Naive thymus-derived CD4-positive, alpha-beta T cell (primary cell): ENCODE measurements at regions of chr14 and their contacts with region 1.

Region 1: GRCh38 chr14:104677512-104678332 is 11.7 kb upstream of the INF2 start:
- DNase-seq: peak; percentile 38 to 86 (median 51)
- ATAC-seq: peak; percentile 78
- H3K4me3 ChIP-seq: peak overlapping the region; percentile 72
- H3K4me3 Mint-ChIP-seq: peak overlapping the region; percentile 68 to 86 (median 82)
- H3K27ac ChIP-seq: peak overlapping the region; percentile 40
- H3K27ac Mint-ChIP-seq: peak overlapping the region in 6 of 9 donors; percentile 21 to 87 (median 54)
- H3K4me1 ChIP-seq: peaks cover 6 to 7% of the 10 kb centered on the region in 2 donors
- H3K4me1 Mint-ChIP-seq: peaks cover 0 to 40% (median 5%) of the 10 kb centered on the region in 7 donors
- H3K27me3 ChIP-seq: no peaks in the 10 kb centered on the region
- H3K27me3 Mint-ChIP-seq: peaks cover 0 to 10% (median 0%) of the 10 kb centered on the region in 5 donors

Region 2: DNA sequence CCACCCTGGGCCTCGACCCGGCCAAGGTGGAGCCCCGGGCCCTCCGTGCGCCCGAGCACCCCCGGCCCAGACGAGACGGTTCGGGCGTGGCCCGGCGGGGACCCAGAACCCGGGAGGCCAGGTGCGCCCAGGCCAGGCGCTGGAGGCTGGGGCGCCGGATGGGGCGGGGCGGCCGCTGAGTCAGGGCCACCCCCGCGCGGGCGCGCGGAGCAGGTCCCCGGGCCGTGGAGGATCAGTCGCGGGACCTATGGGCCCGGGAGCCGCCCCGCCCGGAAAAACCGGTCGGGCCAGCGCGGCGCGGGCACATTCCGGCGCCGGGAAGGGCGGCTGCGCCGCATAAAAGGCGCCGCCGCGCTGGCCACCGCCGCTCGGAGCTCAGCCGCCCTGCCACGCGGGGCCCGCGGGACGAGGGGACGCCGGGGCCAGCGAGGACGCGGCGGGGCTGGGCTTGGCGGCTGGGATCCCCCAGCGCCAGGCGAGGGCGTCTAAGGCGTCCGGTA is 560.9 kb before region 1 on chr14:
- CTCF ChIA-PET with region 1: no interaction called
- POLR2A ChIA-PET with region 1: no interaction called
- intact Hi-C with region 1: no loop called
- DNase-seq: peak in 1 of 9 donors; percentile 47
- ATAC-seq: no peak
- H3K4me3 ChIP-seq: peak overlapping the region; percentile 27
- H3K4me3 Mint-ChIP-seq: peak overlapping the region in 4 of 10 donors; percentile 32 to 72 (median 61)
- H3K27ac ChIP-seq: no peak overlapping the region
- H3K27ac Mint-ChIP-seq: no peak overlapping the region
- H3K4me1 ChIP-seq: no peaks in the 10 kb centered on the region
- H3K4me1 Mint-ChIP-seq: peaks cover 0 to 3% (median 0%) of the 10 kb centered on the region in 7 donors
- H3K27me3 ChIP-seq: no peaks in the 10 kb centered on the region
- H3K27me3 Mint-ChIP-seq: peaks cover 4 to 45% (median 40%) of the 10 kb centered on the region in 5 donors

Region 3: GRCh38 chr14:104614134-104614812 is 63.4 kb before region 1 on chr14:
- CTCF ChIA-PET with region 1: no interaction called
- POLR2A ChIA-PET with region 1: no interaction called
- intact Hi-C with region 1: no loop called
- DNase-seq: no peak
- ATAC-seq: no peak
- H3K4me3 ChIP-seq: no peak overlapping the region
- H3K4me3 Mint-ChIP-seq: no peak overlapping the region
- H3K27ac ChIP-seq: no peak overlapping the region
- H3K27ac Mint-ChIP-seq: no peak overlapping the region
- H3K4me1 ChIP-seq: no peaks in the 10 kb centered on the region
- H3K4me1 Mint-ChIP-seq: peaks cover 0 to 4% (median 0%) of the 10 kb centered on the region in 7 donors
- H3K27me3 ChIP-seq: no peaks in the 10 kb centered on the region
- H3K27me3 Mint-ChIP-seq: peaks cover 18 to 45% (median 36%) of the 10 kb centered on the region in 5 donors

Region 4: GRCh38 chr14:104650057-104650981 is 27.4 kb before region 1 on chr14:
- CTCF ChIA-PET with region 1: no interaction called
- POLR2A ChIA-PET with region 1: no interaction called
- intact Hi-C with region 1: loop called in 1 of 2 experiments (anchors 1 kb)
- DNase-seq: peak; percentile 35 to 74 (median 53)
- ATAC-seq: peak; percentile 82
- H3K4me3 ChIP-seq: peak overlapping the region; percentile 51
- H3K4me3 Mint-ChIP-seq: peak overlapping the region in 8 of 10 donors; percentile 36 to 64 (median 55)
- H3K27ac ChIP-seq: no peak overlapping the region
- H3K27ac Mint-ChIP-seq: no peak overlapping the region
- H3K4me1 ChIP-seq: peaks cover 3 to 9% of the 10 kb centered on the region in 2 donors
- H3K4me1 Mint-ChIP-seq: peaks cover 0 to 3% (median 0%) of the 10 kb centered on the region in 7 donors
- H3K27me3 ChIP-seq: no peaks in the 10 kb centered on the region
- H3K27me3 Mint-ChIP-seq: peaks cover 0 to 18% (median 0%) of the 10 kb centered on the region in 5 donors

Region 5: GRCh38 chr14:104665657-104666522 is 11.8 kb before region 1 on chr14:
- CTCF ChIA-PET with region 1: interaction called, 7 read pairs
- POLR2A ChIA-PET with region 1: interaction called, 12 read pairs
- intact Hi-C with region 1: loop called in 1 of 2 experiments (anchors 1 kb)
- DNase-seq: peak in 7 of 9 donors; percentile 33 to 65 (median 55)
- ATAC-seq: peak; percentile 90
- H3K4me3 ChIP-seq: no peak overlapping the region
- H3K4me3 Mint-ChIP-seq: peak overlapping the region in 9 of 10 donors; percentile 7 to 80 (median 39)
- H3K27ac ChIP-seq: peak overlapping the region; percentile 17
- H3K27ac Mint-ChIP-seq: peak overlapping the region in 8 of 9 donors; percentile 60 to 90 (median 78)
- H3K4me1 ChIP-seq: peaks cover 12 to 14% of the 10 kb centered on the region in 2 donors
- H3K4me1 Mint-ChIP-seq: peaks cover 13 to 32% (median 24%) of the 10 kb centered on the region in 7 donors
- H3K27me3 ChIP-seq: peaks cover 0 to 5% of the 10 kb centered on the region in 2 donors
- H3K27me3 Mint-ChIP-seq: peaks cover 0 to 25% (median 8%) of the 10 kb centered on the region in 5 donors

Region 6: GRCh38 chr14:104689109-104689880 is 11.6 kb after region 1 on chr14 and contains the start of gene INF2:
- CTCF ChIA-PET with region 1: interaction called, 4 read pairs
- POLR2A ChIA-PET with region 1: interaction called, 21 read pairs
- intact Hi-C with region 1: loop called in 1 of 2 experiments (anchors 1 kb)
- DNase-seq: peak in 6 of 9 donors; percentile 36 to 64 (median 40)
- ATAC-seq: peak; percentile 79
- H3K4me3 ChIP-seq: peak within 1 kb of the TSS; percentile 70
- H3K4me3 Mint-ChIP-seq: peak within 1 kb of the TSS; percentile 58 to 91 (median 79)
- H3K27ac ChIP-seq: peak within 1 kb of the TSS; percentile 77
- H3K27ac Mint-ChIP-seq: peak within 1 kb of the TSS in 5 of 9 donors; percentile 8 to 90 (median 65)
- H3K4me1 ChIP-seq: peaks cover 10 to 62% of the 10 kb centered on the region in 2 donors
- H3K4me1 Mint-ChIP-seq: peaks cover 14 to 64% (median 48%) of the 10 kb centered on the region in 7 donors
- H3K27me3 ChIP-seq: no peaks in the 10 kb centered on the region
- H3K27me3 Mint-ChIP-seq: no peaks in the 10 kb centered on the region
- total RNA-seq, gene INF2: 65.0 to 140 (median 95.5) TPM

Region 7: DNA sequence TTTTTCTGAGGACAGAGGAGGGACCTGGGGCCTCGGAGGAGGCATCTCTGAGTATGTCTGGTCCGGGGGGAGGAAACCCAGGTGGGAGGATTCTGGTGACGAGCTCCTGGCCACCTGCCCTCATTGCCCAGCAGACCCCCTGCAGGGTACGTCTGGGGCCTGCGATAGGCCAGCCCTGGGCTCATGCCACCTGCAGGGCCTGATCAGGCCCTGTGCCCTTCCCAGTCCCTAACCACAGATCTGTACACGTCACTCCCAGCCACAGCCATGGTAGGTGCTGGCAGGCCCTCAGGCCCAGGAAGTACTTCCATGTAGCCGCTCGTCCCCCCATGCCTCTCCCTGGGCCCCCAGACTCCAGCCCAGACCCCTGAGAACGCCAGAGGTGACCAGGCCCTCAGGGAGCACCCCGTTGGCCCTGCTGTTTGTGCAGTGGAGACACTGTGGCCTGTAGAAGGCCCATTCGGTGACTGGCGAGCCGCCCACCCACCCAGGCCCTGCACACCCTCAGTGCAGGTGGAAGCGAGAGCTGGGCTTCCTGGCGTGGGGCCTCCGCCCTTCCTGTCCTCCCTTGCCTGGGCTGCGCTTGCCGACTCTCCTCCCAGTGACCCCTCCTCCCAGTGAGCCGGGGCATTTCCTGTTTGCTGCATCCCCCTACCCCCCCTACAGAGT is 17.4 kb after region 1 on chr14:
- CTCF ChIA-PET with region 1: interaction called, 3 read pairs
- POLR2A ChIA-PET with region 1: interaction called, 21 read pairs
- intact Hi-C with region 1: no loop called
- DNase-seq: peak in 8 of 9 donors; percentile 46 to 65 (median 59)
- ATAC-seq: peak; percentile 71
- H3K4me3 ChIP-seq: peak overlapping the region; percentile 47
- H3K4me3 Mint-ChIP-seq: peak overlapping the region; percentile 61 to 80 (median 76)
- H3K27ac ChIP-seq: peak overlapping the region; percentile 70
- H3K27ac Mint-ChIP-seq: peak overlapping the region; percentile 89 to 97 (median 93)
- H3K4me1 ChIP-seq: peaks cover 21 to 50% of the 10 kb centered on the region in 2 donors
- H3K4me1 Mint-ChIP-seq: peaks cover 8 to 49% (median 34%) of the 10 kb centered on the region in 7 donors
- H3K27me3 ChIP-seq: no peaks in the 10 kb centered on the region
- H3K27me3 Mint-ChIP-seq: no peaks in the 10 kb centered on the region

Region 8: GRCh38 chr14:104723648-104724406 is 46.1 kb after region 1 on chr14 and contains the start of gene ADSS1:
- CTCF ChIA-PET with region 1: no interaction called
- POLR2A ChIA-PET with region 1: no interaction called
- intact Hi-C with region 1: loop called in 1 of 2 experiments (anchors 1 kb)
- DNase-seq: peak; percentile 39 to 79 (median 68)
- ATAC-seq: peak; percentile 89
- H3K4me3 ChIP-seq: peak within 1 kb of the TSS; percentile 70
- H3K4me3 Mint-ChIP-seq: peak within 1 kb of the TSS; percentile 43 to 80 (median 63)
- H3K27ac ChIP-seq: peak within 1 kb of the TSS; percentile 58
- H3K27ac Mint-ChIP-seq: peak within 1 kb of the TSS in 1 of 9 donors; percentile 22
- H3K4me1 ChIP-seq: peaks cover 0 to 6% of the 10 kb centered on the region in 2 donors
- H3K4me1 Mint-ChIP-seq: peaks cover 0 to 7% (median 0%) of the 10 kb centered on the region in 7 donors
- H3K27me3 ChIP-seq: no peaks in the 10 kb centered on the region
- H3K27me3 Mint-ChIP-seq: no peaks in the 10 kb centered on the region
- total RNA-seq, gene ADSS1: 0.73 to 4.8 (median 4.2) TPM